ENCODE measurements at regions of chr6 and their contacts with region 1.

Region 1: DNA sequence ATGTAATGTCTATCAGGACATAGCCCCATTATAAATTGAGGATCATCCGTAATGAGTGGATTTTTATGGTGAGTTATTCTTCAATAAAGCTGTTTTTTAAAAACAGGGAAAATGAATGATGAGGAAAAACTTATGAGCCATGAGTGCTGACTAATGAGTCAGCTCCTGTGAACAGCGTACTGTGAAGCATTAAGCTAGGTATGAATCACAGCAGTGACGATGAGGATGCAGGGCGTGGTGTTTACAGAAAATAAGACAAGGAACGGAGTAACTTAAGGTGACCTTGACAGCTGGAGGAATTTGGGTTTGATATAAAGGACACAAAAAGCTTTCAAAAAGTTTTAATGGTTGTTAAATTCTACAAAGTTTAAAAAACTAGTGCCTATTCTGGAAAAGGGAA is 96.3 kb downstream of the FOXF2 start:
- DNase-seq: no peak
- ATAC-seq: peak; percentile 67
- H3K4me3 ChIP-seq: no peak overlapping the region
- H3K27ac ChIP-seq: no peak overlapping the region
- H3K4me1 ChIP-seq: peaks cover 38% of the 10 kb centered on the region
- H3K27me3 ChIP-seq: no peaks in the 10 kb centered on the region
- CTCF ChIP-seq: no peak
- EP300 ChIP-seq: no peak
- POLR2A ChIP-seq: no peak
- RAD21 ChIP-seq: no peak

Region 2: DNA sequence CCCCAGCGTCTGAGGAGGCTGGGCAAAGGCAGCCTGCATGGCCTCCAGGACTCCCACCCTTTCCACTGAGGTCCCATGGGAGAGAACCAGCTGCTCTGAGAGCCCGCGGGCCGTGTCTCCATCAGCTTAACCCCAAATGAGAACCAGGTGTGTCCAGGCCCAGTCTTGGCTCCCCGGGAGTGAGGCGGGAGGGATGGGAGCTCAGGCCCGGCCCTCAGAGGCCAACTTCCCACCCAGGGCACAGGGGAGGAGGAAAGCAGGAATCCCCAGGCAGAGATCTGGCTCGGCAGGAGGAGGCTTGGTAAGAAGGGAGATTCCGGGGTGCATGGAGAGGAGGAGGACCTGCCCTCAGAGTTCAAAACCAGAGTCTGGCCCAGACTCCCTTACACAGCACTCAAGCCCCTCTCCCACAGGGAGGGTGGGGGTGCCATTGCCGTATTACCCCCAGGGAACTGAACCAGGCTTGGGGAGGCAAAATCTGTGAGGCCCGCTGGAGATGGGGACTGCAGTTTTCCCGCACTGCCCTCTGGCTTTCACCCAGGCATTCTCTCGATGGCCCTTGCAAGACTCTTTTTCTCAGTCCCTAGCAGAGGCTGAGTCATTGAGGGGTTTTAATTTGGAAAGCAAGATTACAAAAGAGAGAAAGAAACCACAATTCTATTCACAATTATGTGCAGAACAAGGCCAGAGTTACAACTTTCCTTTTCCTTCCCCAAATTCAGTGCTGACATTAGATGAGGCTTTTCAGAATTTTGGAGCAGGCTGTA is 79.2 kb before region 1 on chr6:
- CTCF ChIA-PET with region 1: no interaction called
- POLR2A ChIA-PET with region 1: no interaction called
- RAD21 ChIA-PET with region 1: no interaction called
- SMC1A ChIA-PET with region 1: no interaction called
- in situ Hi-C with region 1: no loop called
- intact Hi-C with region 1: no loop called
- DNase-seq: no peak
- ATAC-seq: no peak
- H3K4me3 ChIP-seq: no peak overlapping the region
- H3K27ac ChIP-seq: no peak overlapping the region
- H3K4me1 ChIP-seq: no peaks in the 10 kb centered on the region
- H3K27me3 ChIP-seq: peaks cover 1 to 2% of the 10 kb centered on the region in 2 experiments; a peak in 2 of 4 replicates
- CTCF ChIP-seq: no peak
- EP300 ChIP-seq: no peak
- POLR2A ChIP-seq: no peak
- RAD21 ChIP-seq: no peak

Region 3: DNA sequence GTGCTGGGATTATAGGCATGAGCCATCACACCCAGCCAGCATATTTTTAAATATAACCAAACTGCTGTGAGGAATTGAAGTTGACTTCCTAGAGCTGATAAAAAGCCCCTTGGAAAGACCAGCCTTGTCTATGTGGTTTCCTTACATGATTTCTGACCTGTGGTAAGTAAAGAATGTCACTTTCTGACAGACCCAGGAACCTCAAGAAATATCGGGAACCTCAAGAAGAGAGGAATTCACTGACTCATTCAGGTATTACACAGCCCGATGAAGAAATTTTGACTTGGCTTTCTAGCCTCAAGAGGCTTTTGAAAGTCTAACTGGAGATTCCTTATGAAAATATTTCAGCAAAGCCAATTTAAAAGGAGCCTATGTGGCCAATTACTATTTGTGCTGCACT is 24.5 kb before region 1 on chr6:
- CTCF ChIA-PET with region 1: interaction called, 6 read pairs
- POLR2A ChIA-PET with region 1: no interaction called
- RAD21 ChIA-PET with region 1: interaction called, 5 read pairs
- SMC1A ChIA-PET with region 1: interaction called, 10 read pairs
- in situ Hi-C with region 1: no loop called
- intact Hi-C with region 1: no loop called
- DNase-seq: peak; percentile 62
- ATAC-seq: peak; percentile 92
- H3K4me3 ChIP-seq: no peak overlapping the region
- H3K27ac ChIP-seq: no peak overlapping the region
- H3K4me1 ChIP-seq: peaks cover 4% of the 10 kb centered on the region; the same call in 1 of the 2 replicates
- H3K27me3 ChIP-seq: no peaks in the 10 kb centered on the region
- CTCF ChIP-seq: no peak
- EP300 ChIP-seq: 0 out of 4 replicates have a peak, but pooled peaks of 1 of the 2 experiments have one; percentile 35
- POLR2A ChIP-seq: no peak
- RAD21 ChIP-seq: no peak

Region 4: GRCh38 chr6:1470040-1470439 is 15.6 kb before region 1 on chr6:
- CTCF ChIA-PET with region 1: interaction called, 19 read pairs
- POLR2A ChIA-PET with region 1: interaction called, 25 read pairs
- RAD21 ChIA-PET with region 1: interaction called, 82 read pairs
- SMC1A ChIA-PET with region 1: interaction called, 111 read pairs
- in situ Hi-C with region 1: no loop called
- intact Hi-C with region 1: no loop called
- DNase-seq: peak; percentile 74
- ATAC-seq: peak; percentile 93
- H3K4me3 ChIP-seq: peak overlapping the region; percentile 35; the same call in 1 of the 2 replicates
- H3K27ac ChIP-seq: peak overlapping the region; percentile 57
- H3K4me1 ChIP-seq: peaks cover 34% of the 10 kb centered on the region
- H3K27me3 ChIP-seq: no peaks in the 10 kb centered on the region
- CTCF ChIP-seq: no peak
- EP300 ChIP-seq: peak; percentile 50 to 76; a peak in 2 of 4 replicates
- POLR2A ChIP-seq: no peak
- RAD21 ChIP-seq: no peak

Measured in GM12878 (cell line).